PC-3 (cell line): ENCODE measurements at regions of chr5 and their contacts with region 1.

Region 1: GRCh38 chr5:81301271-81302015 is at the start of gene ZCCHC9:
- DNase-seq: peak; percentile 90
- ATAC-seq: peak; percentile 71
- H3K4me3 ChIP-seq: peak within 1 kb of the TSS; percentile 87
- H3K27ac ChIP-seq: peak within 1 kb of the TSS; percentile 95
- H3K4me1 ChIP-seq: peaks cover 39% of the 10 kb centered on the region
- H3K27me3 ChIP-seq: no peaks in the 10 kb centered on the region
- CTCF ChIP-seq: peak; percentile 11; the same call in 1 of the 2 replicates
- total RNA-seq, gene ZCCHC9: 19.4 and 22.7 TPM in 2 replicates

Region 2: GRCh38 chr5:81194633-81195333 is 106.7 kb before region 1 on chr5:
- CTCF ChIA-PET with region 1: no interaction called
- POLR2A ChIA-PET with region 1: no interaction called
- intact Hi-C with region 1: loop called (anchors 5 kb)
- DNase-seq: peak; percentile 80
- ATAC-seq: peak; percentile 99
- H3K4me3 ChIP-seq: no peak overlapping the region
- H3K27ac ChIP-seq: no peak overlapping the region
- H3K4me1 ChIP-seq: no peaks in the 10 kb centered on the region
- H3K27me3 ChIP-seq: 0 out of 2 replicates have a peak, but pooled peaks cover 3% of the 10 kb centered on the region
- CTCF ChIP-seq: peak; percentile 91

Region 3: GRCh38 chr5:81247441-81247972 is 53.9 kb before region 1 on chr5:
- CTCF ChIA-PET with region 1: interaction called, 3 read pairs
- POLR2A ChIA-PET with region 1: interaction called, 3 read pairs
- intact Hi-C with region 1: loop called (anchors 1 kb)
- DNase-seq: peak; percentile 14
- ATAC-seq: no peak
- H3K4me3 ChIP-seq: no peak overlapping the region
- H3K27ac ChIP-seq: no peak overlapping the region
- H3K4me1 ChIP-seq: peaks cover 17% of the 10 kb centered on the region
- H3K27me3 ChIP-seq: no peaks in the 10 kb centered on the region
- CTCF ChIP-seq: no peak

Region 4: GRCh38 chr5:81288021-81288433 is 13.4 kb before region 1 on chr5:
- CTCF ChIA-PET with region 1: interaction called, 11 read pairs
- POLR2A ChIA-PET with region 1: no interaction called
- intact Hi-C with region 1: no loop called
- DNase-seq: no peak
- ATAC-seq: no peak
- H3K4me3 ChIP-seq: no peak overlapping the region
- H3K27ac ChIP-seq: no peak overlapping the region
- H3K4me1 ChIP-seq: no peaks in the 10 kb centered on the region
- H3K27me3 ChIP-seq: no peaks in the 10 kb centered on the region
- CTCF ChIP-seq: no peak

Region 5: GRCh38 chr5:81345411-81346003 is 44.1 kb after region 1 on chr5:
- CTCF ChIA-PET with region 1: no interaction called
- POLR2A ChIA-PET with region 1: no interaction called
- intact Hi-C with region 1: no loop called
- DNase-seq: no peak
- ATAC-seq: no peak
- H3K4me3 ChIP-seq: no peak overlapping the region
- H3K27ac ChIP-seq: no peak overlapping the region
- H3K4me1 ChIP-seq: no peaks in the 10 kb centered on the region
- H3K27me3 ChIP-seq: no peaks in the 10 kb centered on the region
- CTCF ChIP-seq: no peak

Region 6: GRCh38 chr5:81420039-81420667 is 118.7 kb after region 1 on chr5:
- CTCF ChIA-PET with region 1: no interaction called
- POLR2A ChIA-PET with region 1: no interaction called
- intact Hi-C with region 1: loop called (anchors 1 kb)
- DNase-seq: peak; percentile 89
- ATAC-seq: peak; percentile 81
- H3K4me3 ChIP-seq: peak overlapping the region; percentile 21; the same call in 1 of the 2 replicates
- H3K27ac ChIP-seq: peak overlapping the region; percentile 99
- H3K4me1 ChIP-seq: peaks cover 65% of the 10 kb centered on the region
- H3K27me3 ChIP-seq: no peaks in the 10 kb centered on the region
- CTCF ChIP-seq: no peak